Posterior vena cava (tissue), 2 donors: ENCODE measurements at regions of chr5 and their contacts with region 1.

Region 1: GRCh38 chr5:54753034-54753433 is 232.4 kb downstream of the ESM1 start:
- DNase-seq: no peak

Region 2: GRCh38 chr5:53397845-53398244 is 1355.2 kb before region 1 on chr5:
- intact Hi-C with region 1: no loop called
- DNase-seq: peak; percentile 84

Region 3: DNA sequence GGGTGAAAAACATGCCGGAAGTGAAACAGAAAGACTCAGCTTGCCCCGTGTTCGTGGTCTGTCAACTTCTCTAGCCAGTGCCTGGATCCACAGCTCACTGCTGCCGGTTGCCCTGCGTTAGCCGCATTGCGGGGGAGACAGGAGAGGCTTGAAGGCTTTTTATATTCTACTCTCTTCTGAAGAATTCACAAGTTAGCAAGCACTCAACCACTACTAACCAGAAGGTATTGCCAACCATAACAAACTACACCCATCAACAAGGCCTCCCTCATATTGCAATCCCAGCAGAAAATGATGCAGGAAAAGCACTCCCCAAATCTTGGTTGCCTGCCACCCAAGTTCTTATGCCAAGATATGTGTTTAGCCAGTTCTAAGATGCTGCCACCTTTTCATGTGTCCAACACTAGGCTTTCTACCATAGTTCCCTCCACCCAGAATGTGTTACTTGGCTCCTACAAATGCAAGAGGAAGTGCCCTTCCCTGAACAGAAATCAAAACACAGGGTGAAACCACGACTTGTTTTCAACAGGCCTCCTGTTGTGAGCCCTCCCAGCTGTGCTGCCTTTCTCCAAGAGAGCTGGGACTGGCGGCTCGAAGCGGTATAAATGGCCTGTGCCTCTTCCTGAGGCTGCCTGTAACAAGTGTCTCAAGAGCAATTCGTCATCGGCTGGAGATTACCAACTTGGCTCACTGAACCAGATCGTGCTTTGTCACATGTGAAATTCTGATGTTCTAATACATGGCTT is 106.5 kb before region 1 on chr5:
- intact Hi-C with region 1: loop called in 1 of 2 experiments (anchors 10 kb)
- DNase-seq: peak; percentile 90